GM10248 (cell line): ENCODE measurements at regions of chr9 and their contacts with region 1.

Region 1: GRCh38 chr9:91359734-91360470 is 1.8 kb downstream of the AUH start:
- DNase-seq: no peak
- CTCF ChIP-seq: no peak

Region 2: GRCh38 chr9:91346652-91347051 is 13.2 kb before region 1 on chr9:
- CTCF ChIA-PET with region 1: interaction called, 15 read pairs
- POLR2A ChIA-PET with region 1: no interaction called
- DNase-seq: peak; percentile 24
- CTCF ChIP-seq: no peak